ENCODE measurements at regions of chr2 and their contacts with region 1.

Region 1: DNA sequence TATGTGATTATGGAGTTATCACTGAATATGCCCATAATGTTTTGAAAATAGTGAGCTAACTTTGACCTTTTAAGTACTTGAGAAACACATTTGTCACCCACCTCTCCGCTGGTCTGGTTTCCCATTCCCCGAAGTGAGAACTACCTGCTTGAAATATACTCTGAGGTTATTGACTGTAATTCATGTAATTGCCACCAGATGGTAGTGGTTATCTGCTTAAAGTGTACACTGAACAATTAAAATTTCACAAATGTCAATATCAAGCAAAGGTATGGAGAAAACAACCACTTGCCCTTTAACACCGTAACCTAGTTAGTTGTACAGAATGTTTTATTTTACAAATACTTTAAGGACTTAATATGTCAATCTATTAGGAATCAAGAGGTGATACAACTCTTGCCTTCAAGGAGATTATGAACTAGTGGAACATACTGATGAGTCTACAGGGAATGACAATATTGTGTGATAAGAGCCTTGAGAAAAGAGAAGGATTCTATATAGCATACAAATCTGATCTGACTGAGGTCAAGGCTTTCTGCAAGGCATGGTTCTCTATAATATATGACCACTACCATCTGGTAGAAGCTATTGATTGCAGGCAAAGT is 316.8 kb upstream of the KCNH7 start:
- DNase-seq: peak; percentile 24
- H3K4me3 ChIP-seq: no peak overlapping the region
- CTCF ChIP-seq: peak; percentile 43

Region 2: GRCh38 chr2:164495491-164496223 is 1340.3 kb after region 1 on chr2:
- in situ Hi-C with region 1: loop called (anchors 25 kb)
- DNase-seq: peak; percentile 36
- H3K4me3 ChIP-seq: no peak overlapping the region
- CTCF ChIP-seq: peak; percentile 71

Measured in astrocyte of the cerebellum (primary cell).